ENCODE measurements at regions of chr18 and their contacts with region 1.

Region 1: GRCh38 chr18:56869189-56869777 is 218.1 kb downstream of the WDR7 start:
- DNase-seq: peak; percentile 25
- H3K4me3 ChIP-seq: no peak overlapping the region
- H3K27ac ChIP-seq: no peak overlapping the region
- H3K4me1 ChIP-seq: no peaks in the 10 kb centered on the region
- H3K27me3 ChIP-seq: no peaks in the 10 kb centered on the region
- CTCF ChIP-seq: peak; percentile 79 to 80

Region 2: DNA sequence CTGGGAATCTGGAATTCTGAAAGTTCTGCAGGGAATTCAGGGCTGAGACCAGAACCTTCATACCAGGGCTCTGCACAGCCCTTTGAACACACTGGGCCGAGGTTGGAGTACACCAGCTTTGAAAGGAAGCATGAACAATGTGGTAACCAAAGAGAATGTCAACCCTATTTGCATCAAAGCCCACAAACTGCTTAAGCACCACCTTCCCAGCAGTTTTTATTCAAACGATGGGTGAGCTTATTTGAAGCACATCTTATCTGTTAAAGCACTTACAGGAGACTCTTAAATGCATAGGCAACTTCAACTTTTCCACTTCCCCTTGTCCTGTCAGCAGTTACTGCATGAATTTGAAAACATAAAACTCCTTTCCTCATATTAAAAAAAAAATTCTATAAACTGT is 327.5 kb before region 1 on chr18:
- CTCF ChIA-PET with region 1: no interaction called
- dilution Hi-C with region 1: no loop called
- in situ Hi-C with region 1: no loop called
- intact Hi-C with region 1: no loop called
- DNase-seq: no peak
- H3K4me3 ChIP-seq: no peak overlapping the region
- H3K27ac ChIP-seq: no peak overlapping the region
- H3K4me1 ChIP-seq: no peaks in the 10 kb centered on the region
- H3K27me3 ChIP-seq: peaks cover 2% of the 10 kb centered on the region
- CTCF ChIP-seq: no peak

Region 3: GRCh38 chr18:56992777-56993176 is 123.5 kb after region 1 on chr18:
- CTCF ChIA-PET with region 1: no interaction called
- dilution Hi-C with region 1: no loop called
- in situ Hi-C with region 1: no loop called
- intact Hi-C with region 1: no loop called
- DNase-seq: peak; percentile 70
- H3K4me3 ChIP-seq: no peak overlapping the region
- H3K27ac ChIP-seq: no peak overlapping the region
- H3K4me1 ChIP-seq: peaks cover 5% of the 10 kb centered on the region
- H3K27me3 ChIP-seq: no peaks in the 10 kb centered on the region
- CTCF ChIP-seq: no peak

Region 4: DNA sequence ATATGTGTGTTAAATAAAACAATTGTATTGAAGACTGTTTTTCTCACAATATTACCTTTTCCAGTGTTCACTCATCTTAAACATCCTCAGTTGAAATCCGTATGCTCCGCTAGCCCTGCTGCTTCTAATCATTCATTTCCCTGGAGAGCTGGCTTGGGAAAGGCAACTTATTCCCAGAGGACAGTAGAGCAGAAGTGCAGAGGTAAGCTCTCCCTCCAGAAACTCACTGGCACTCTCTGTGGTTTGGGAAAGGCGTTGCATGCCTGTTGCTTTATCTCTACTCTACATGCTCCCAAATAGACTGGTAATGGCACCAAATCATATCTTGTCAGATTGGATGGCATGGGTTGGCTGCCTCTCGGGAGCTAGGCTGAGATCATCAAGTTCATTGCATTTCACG is 160.5 kb after region 1 on chr18:
- CTCF ChIA-PET with region 1: no interaction called
- dilution Hi-C with region 1: no loop called
- in situ Hi-C with region 1: no loop called
- intact Hi-C with region 1: loop called (anchors 2 kb)
- DNase-seq: no peak
- H3K4me3 ChIP-seq: no peak overlapping the region
- H3K27ac ChIP-seq: no peak overlapping the region
- H3K4me1 ChIP-seq: peaks cover 3% of the 10 kb centered on the region
- H3K27me3 ChIP-seq: no peaks in the 10 kb centered on the region
- CTCF ChIP-seq: peak; percentile 22 to 51